Aorta (tissue), 5 donors: ENCODE measurements at regions of chr4 and their contacts with region 1.

Region 1: DNA sequence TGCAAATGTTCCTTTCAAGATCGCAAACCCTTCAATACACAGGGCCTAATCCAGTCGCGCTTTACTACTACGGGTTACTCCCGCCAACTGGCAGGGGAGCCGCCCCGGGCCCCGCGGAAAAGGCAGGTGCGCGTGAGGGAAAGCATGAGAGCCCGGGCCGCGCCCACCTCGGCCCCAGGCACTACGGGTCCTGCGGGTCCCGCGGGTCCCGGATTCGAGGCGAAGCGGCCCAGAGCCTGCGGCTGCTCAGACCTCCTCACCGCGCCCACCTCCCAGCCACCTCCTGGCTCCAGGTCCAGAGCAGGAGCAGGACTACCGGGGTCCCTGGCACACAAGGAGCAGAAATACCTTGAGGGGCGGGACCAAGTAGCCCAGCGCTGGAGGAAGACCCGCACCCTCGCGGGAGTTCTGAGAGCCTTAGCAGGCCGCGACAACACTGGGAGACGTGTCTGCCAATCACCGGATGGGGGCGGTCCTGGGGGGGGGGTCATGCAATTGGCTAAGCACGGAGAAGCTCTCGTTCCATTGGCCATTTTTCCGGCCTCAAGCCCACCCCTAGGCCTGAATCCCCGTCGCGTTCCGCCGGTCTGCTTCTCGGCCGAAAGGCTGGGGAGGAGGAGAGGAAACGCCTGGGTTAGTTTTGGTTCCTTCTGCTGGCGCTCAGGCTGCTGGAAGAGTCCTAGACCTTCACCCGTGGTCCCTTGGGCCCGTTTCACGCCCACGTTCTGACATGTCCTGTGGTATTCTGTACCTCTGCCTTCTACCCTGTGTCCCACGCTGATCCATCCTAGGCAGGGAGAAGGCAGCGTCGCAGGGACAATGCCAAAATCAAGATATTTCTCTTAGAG is 29.0 kb downstream of the ERVMER34-1 start:
- DNase-seq: peak; percentile 95 to 96
- ATAC-seq: peak; percentile 98
- H3K4me3 ChIP-seq: peak overlapping the region; percentile 60 to 62
- H3K27ac ChIP-seq: peak overlapping the region; percentile 23 to 94
- H3K4me1 ChIP-seq: no peaks in the 10 kb centered on the region
- H3K27me3 ChIP-seq: no peaks in the 10 kb centered on the region

Region 2: GRCh38 chr4:52431410-52431809 is 290.8 kb before region 1 on chr4:
- intact Hi-C with region 1: no loop called
- DNase-seq: no peak
- ATAC-seq: no peak
- H3K4me3 ChIP-seq: no peak overlapping the region
- H3K27ac ChIP-seq: no peak overlapping the region
- H3K4me1 ChIP-seq: no peaks in the 10 kb centered on the region
- H3K27me3 ChIP-seq: peaks cover 0 to 2% of the 10 kb centered on the region in 2 donors

Region 3: DNA sequence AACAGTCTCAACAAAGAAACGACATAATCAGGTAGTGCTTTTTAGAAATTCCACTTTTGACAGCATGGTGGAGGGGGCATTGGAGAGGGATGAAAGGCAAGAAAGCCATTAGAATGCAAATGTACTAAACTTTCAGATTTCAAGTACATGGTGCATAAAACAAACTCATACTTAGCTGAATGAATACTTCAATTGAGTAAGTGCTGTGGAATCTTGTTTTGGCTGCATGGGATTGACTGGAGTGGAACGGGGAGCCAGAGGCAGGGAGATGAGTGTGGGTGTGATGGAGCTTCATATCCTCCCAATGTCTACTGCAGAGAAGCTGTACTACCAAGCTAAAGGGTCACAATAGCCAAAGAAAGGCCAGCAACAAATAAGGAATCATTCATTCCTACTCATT is 115.5 kb before region 1 on chr4:
- intact Hi-C with region 1: no loop called
- DNase-seq: no peak
- ATAC-seq: no peak
- H3K4me3 ChIP-seq: no peak overlapping the region
- H3K27ac ChIP-seq: no peak overlapping the region
- H3K4me1 ChIP-seq: peaks cover 0 to 4% of the 10 kb centered on the region in 2 donors
- H3K27me3 ChIP-seq: no peaks in the 10 kb centered on the region

Region 4: GRCh38 chr4:52861879-52862616 is 139.9 kb after region 1 on chr4 and contains the start of gene RASL11B:
- intact Hi-C with region 1: loop called (anchors 5 kb)
- DNase-seq: peak; percentile 89 to 94
- ATAC-seq: peak; percentile 97
- H3K4me3 ChIP-seq: peak within 1 kb of the TSS; percentile 71 to 75
- H3K27ac ChIP-seq: peak within 1 kb of the TSS; percentile 11 to 78
- H3K4me1 ChIP-seq: peaks cover 0 to 2% of the 10 kb centered on the region in 2 donors
- H3K27me3 ChIP-seq: no peaks in the 10 kb centered on the region
- total RNA-seq, gene RASL11B: 5.6 to 5.7 TPM